K562 (cell line): ENCODE measurements at regions of chr1 and their contacts with region 1.

Region 1: DNA sequence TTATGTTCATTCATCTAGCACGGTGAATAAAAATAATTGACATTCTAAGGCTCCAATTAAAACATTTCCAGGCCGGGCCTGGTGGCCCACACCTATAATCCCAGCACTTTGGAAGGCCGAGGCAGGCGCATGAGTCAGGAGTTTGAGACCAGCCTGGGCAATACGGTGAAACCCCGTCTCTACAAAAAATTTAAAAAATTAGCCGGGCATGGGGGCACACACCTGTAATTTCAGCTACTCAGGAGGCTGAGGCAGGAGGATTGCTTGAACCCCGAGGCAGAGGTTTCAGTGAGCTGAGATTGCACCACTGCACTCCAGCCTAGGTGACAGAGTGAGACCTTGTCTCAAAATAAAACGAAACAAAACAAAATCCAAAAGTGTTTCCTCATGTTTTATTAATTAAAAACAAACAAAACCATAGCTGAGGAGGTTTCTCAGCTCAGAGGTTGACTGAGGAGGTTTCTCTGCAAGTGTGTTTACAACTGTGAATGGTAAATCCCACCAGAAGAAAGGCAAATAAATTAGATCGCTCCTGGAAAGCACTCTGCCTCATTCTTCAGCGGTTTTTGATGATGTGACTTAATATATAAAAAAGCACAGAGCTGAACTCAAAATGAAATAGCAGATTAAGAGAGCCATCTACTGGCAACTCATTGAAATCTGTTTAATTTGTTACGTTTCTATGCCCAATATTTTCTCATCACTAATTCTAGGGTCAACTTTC is 37.7 kb upstream of the ATG4C start:
- DNase-seq: peak in 2 of 4 experiments; percentile 26 to 41
- ATAC-seq: peak; percentile 70; the same call in 2 of the 3 replicates
- H3K4me3 ChIP-seq: no peak overlapping the region
- H3K27ac ChIP-seq: no peak overlapping the region
- H3K4me1 ChIP-seq: no peaks in the 10 kb centered on the region
- H3K27me3 ChIP-seq: no peaks in the 10 kb centered on the region
- CTCF ChIP-seq: peak; percentile 50 to 80 (median 53); a peak in 5 of 6 replicates
- EP300 ChIP-seq: no peak
- POLR2A ChIP-seq: no peak
- RAD21 ChIP-seq: peak; percentile 89 to 91

Region 2: DNA sequence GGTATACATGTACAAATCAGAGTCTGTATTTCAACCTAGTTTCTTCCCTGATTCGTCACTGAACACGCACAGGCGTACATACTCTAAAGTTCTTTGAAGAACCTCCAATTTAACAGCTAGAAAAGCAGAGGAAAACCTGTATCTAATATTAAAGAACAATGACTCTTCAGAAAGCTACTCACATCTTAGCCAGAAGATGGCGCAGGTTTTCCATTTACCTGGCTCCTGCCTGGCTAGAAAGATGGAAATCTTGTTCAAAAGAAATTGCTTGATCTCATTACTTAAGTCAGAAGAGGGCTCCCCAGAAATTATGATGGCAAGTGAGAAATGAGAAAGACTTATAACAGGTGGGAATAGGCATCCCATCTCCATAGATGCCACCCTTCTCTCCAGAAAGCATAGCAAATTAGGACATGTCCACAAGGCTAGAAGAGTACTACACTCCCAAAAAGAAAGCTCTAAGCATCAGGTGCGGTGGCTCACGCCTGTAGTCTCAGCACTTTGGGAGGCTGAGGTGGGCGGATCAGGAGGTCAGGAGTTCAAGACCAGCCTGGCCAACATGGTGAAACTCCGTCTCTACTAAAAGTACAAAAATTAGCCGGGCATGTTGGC is 570.6 kb before region 1 on chr1:
- CTCF ChIA-PET with region 1: interaction called, 10 read pairs
- POLR2A ChIA-PET with region 1: no interaction called
- in situ Hi-C with region 1: no loop called
- intact Hi-C with region 1: loop called (anchors 1 kb)
- DNase-seq: peak; percentile 21 to 46 (median 30)
- ATAC-seq: peak; percentile 75
- H3K4me3 ChIP-seq: no peak overlapping the region
- H3K27ac ChIP-seq: no peak overlapping the region
- H3K4me1 ChIP-seq: no peaks in the 10 kb centered on the region
- H3K27me3 ChIP-seq: peaks cover 4 to 5% of the 10 kb centered on the region in 2 experiments; a peak in 3 of 5 replicates
- CTCF ChIP-seq: peak; percentile 55 to 82 (median 60); a peak in 5 of 6 replicates
- EP300 ChIP-seq: no peak
- POLR2A ChIP-seq: no peak
- RAD21 ChIP-seq: peak; percentile 66 to 87

Region 3: GRCh38 chr1:62508187-62508758 is 238.0 kb before region 1 on chr1:
- CTCF ChIA-PET with region 1: interaction called, 19 read pairs
- POLR2A ChIA-PET with region 1: no interaction called
- in situ Hi-C with region 1: no loop called
- intact Hi-C with region 1: loop called (anchors 1 kb)
- DNase-seq: peak in 3 of 4 experiments; percentile 12 to 51 (median 15)
- ATAC-seq: peak; percentile 73
- H3K4me3 ChIP-seq: no peak overlapping the region
- H3K27ac ChIP-seq: no peak overlapping the region
- H3K4me1 ChIP-seq: no peaks in the 10 kb centered on the region
- H3K27me3 ChIP-seq: no peaks in the 10 kb centered on the region
- CTCF ChIP-seq: peak; percentile 40 to 72 (median 48); a peak in 5 of 6 replicates
- EP300 ChIP-seq: no peak
- POLR2A ChIP-seq: no peak
- RAD21 ChIP-seq: peak; percentile 42 to 70

Region 4: GRCh38 chr1:62530516-62531154 is 215.6 kb before region 1 on chr1:
- CTCF ChIA-PET with region 1: interaction called, 36 read pairs
- POLR2A ChIA-PET with region 1: no interaction called
- in situ Hi-C with region 1: loop called (anchors 5 kb)
- intact Hi-C with region 1: loop called (anchors 1 kb)
- DNase-seq: peak; percentile 19 to 66 (median 39)
- ATAC-seq: peak; percentile 97
- H3K4me3 ChIP-seq: no peak overlapping the region
- H3K27ac ChIP-seq: no peak overlapping the region
- H3K4me1 ChIP-seq: no peaks in the 10 kb centered on the region
- H3K27me3 ChIP-seq: no peaks in the 10 kb centered on the region
- CTCF ChIP-seq: peak; percentile 79 to 84 (median 79)
- EP300 ChIP-seq: no peak
- POLR2A ChIP-seq: no peak
- RAD21 ChIP-seq: peak; percentile 71 to 89

Region 5: GRCh38 chr1:62599044-62599443 is 147.2 kb before region 1 on chr1:
- CTCF ChIA-PET with region 1: no interaction called
- POLR2A ChIA-PET with region 1: no interaction called
- in situ Hi-C with region 1: no loop called
- intact Hi-C with region 1: no loop called
- DNase-seq: no peak
- ATAC-seq: no peak
- H3K4me3 ChIP-seq: no peak overlapping the region
- H3K27ac ChIP-seq: no peak overlapping the region
- H3K4me1 ChIP-seq: no peaks in the 10 kb centered on the region
- H3K27me3 ChIP-seq: no peaks in the 10 kb centered on the region
- CTCF ChIP-seq: no peak
- EP300 ChIP-seq: no peak
- POLR2A ChIP-seq: no peak
- RAD21 ChIP-seq: no peak

Region 6: GRCh38 chr1:62735491-62736171 is 10.6 kb before region 1 on chr1:
- CTCF ChIA-PET with region 1: no interaction called
- POLR2A ChIA-PET with region 1: no interaction called
- in situ Hi-C with region 1: no loop called
- intact Hi-C with region 1: no loop called
- DNase-seq: no peak
- ATAC-seq: no peak
- H3K4me3 ChIP-seq: no peak overlapping the region
- H3K27ac ChIP-seq: no peak overlapping the region
- H3K4me1 ChIP-seq: no peaks in the 10 kb centered on the region
- H3K27me3 ChIP-seq: no peaks in the 10 kb centered on the region; a peak in 2 of 5 replicates
- CTCF ChIP-seq: no peak
- EP300 ChIP-seq: no peak
- POLR2A ChIP-seq: no peak
- RAD21 ChIP-seq: no peak

Region 7: GRCh38 chr1:62810420-62811274 is 64.4 kb after region 1 on chr1:
- CTCF ChIA-PET with region 1: no interaction called
- POLR2A ChIA-PET with region 1: no interaction called
- in situ Hi-C with region 1: no loop called
- intact Hi-C with region 1: no loop called
- DNase-seq: no peak
- ATAC-seq: no peak
- H3K4me3 ChIP-seq: no peak overlapping the region
- H3K27ac ChIP-seq: no peak overlapping the region
- H3K4me1 ChIP-seq: no peaks in the 10 kb centered on the region
- H3K27me3 ChIP-seq: no peaks in the 10 kb centered on the region
- CTCF ChIP-seq: no peak
- EP300 ChIP-seq: no peak
- POLR2A ChIP-seq: no peak
- RAD21 ChIP-seq: no peak